Activated CD4-positive, alpha-beta memory T cell treated with anti-CD3 and anti-CD28 coated beads, Interleukin-2, amount 10 ng/mL, durations not matched to agents 7 days and 5 days (primary cell): ENCODE measurements at regions of chr2 and their contacts with region 1.

Region 1: DNA sequence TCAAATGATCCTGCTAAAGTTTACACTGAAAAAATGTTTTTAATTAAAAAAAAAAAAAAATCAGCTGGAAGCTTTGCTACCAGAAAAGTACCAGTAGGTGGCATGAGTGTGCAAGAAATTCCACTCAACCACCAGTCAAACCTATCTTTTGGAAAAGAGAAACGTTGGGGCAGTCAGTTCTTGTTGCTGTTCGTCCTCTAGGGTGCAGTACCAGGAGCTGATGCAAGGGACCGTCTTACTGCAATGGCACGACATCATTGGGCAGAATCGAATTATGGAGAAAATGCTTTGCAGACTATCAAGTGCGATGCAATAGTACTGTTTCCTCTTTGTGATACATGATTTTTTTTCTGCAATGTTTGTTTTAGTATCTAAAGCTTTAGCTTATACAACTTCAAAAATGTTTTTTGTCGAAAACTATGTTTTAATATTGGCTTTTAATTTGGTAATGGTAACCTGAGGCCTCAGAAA is 18.3 kb downstream of the YPEL5 start:
- DNase-seq: peak; percentile 69
- H3K4me3 Mint-ChIP-seq: no peak overlapping the region
- H3K27ac Mint-ChIP-seq: no peak overlapping the region
- H3K4me1 Mint-ChIP-seq: peaks cover 3% of the 10 kb centered on the region
- H3K27me3 Mint-ChIP-seq: no peaks in the 10 kb centered on the region

Region 2: DNA sequence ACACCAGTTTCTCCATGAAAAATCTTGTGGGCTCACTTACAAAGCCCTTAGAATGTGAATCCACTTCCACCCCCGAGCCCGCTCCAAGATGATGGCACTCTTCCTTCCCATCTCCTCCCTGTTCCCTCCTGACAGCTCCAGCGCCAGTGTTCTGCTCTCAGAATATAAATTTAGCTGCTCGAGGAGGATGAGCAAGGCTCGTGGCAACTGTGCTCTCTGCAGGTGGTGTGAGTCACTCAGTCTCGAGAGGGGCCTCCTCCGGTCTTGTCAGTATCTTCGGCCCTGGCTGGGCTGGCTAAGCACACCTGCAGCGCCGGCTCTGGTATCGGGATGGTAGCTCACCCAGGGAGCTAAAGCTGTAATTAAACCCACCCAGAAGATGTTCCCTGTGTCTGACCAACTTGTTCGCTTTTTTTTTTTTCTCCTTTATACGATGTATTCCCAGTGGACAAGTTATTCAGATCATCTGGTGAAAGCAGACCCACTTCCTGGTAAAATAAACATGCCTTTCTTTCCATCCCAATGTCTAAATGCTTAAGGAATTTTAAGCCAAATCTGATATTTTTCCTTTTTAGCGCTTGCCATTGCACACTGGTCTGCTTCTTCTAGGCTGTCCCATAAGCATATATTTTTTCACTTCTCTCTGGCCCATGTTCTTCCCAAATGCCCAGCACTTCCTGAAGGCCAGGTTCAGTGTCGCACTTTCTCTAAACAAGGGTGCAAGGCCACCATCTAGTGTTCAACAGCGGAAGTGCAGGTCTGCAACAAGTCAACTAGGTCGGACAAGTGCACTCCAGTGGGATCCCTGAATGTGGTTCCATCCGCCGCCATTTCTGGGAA is 49.7 kb before region 1 on chr2:
- CTCF ChIA-PET with region 1: interaction called, 14 read pairs
- POLR2A ChIA-PET with region 1: no interaction called
- DNase-seq: peak; percentile 70
- H3K4me3 Mint-ChIP-seq: no peak overlapping the region
- H3K27ac Mint-ChIP-seq: no peak overlapping the region
- H3K4me1 Mint-ChIP-seq: peaks cover 3% of the 10 kb centered on the region
- H3K27me3 Mint-ChIP-seq: peaks cover 2% of the 10 kb centered on the region

Region 3: DNA sequence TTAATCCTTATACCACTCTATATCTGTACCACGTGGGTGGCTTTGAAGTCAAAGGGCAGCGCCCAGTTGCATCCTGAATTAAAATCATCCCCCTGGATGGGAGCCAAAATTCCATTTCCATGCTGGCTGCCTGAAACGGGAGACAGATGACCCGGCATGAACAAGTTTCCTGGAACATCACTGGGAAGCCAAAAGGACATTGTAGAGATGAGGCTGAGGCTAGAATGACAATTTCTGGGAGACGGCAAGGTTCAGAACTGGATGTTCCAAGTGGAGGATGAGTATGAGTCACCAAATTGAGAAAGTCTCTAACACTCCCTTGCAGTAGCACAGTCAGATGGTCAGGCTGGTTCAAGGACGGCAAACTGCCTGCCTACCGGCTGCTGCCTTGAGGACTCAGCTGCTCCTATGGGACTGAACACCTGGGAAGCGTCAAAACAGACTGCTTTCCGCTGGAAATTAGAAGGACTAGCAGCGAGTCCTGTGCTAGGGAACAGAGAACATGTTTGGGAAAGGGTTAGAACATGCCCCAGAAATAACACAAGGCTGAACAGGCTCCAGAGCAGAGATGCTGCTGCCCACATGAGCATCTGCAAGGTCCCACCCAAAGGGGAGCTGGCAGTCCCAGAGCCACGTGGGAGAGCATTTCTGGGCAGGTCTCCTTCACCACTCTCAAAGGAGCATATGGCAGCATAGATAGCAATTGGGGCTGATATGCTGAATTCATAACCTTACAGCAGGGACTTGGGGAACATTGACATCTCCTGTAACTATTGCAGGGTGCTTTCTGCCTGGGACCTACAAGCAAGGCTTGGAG is 13.7 kb after region 1 on chr2:
- CTCF ChIA-PET with region 1: interaction called, 12 read pairs
- POLR2A ChIA-PET with region 1: interaction called, 3 read pairs
- DNase-seq: no peak
- H3K4me3 Mint-ChIP-seq: no peak overlapping the region
- H3K27ac Mint-ChIP-seq: no peak overlapping the region
- H3K4me1 Mint-ChIP-seq: no peaks in the 10 kb centered on the region
- H3K27me3 Mint-ChIP-seq: no peaks in the 10 kb centered on the region

Region 4: GRCh38 chr2:30208452-30208851 is 43.4 kb after region 1 on chr2:
- CTCF ChIA-PET with region 1: interaction called, 41 read pairs
- POLR2A ChIA-PET with region 1: no interaction called
- DNase-seq: peak; percentile 41
- H3K4me3 Mint-ChIP-seq: no peak overlapping the region
- H3K27ac Mint-ChIP-seq: no peak overlapping the region
- H3K4me1 Mint-ChIP-seq: peaks cover 16% of the 10 kb centered on the region
- H3K27me3 Mint-ChIP-seq: no peaks in the 10 kb centered on the region

Region 5: GRCh38 chr2:30280611-30281434 is 115.7 kb after region 1 on chr2:
- CTCF ChIA-PET with region 1: no interaction called
- POLR2A ChIA-PET with region 1: no interaction called
- DNase-seq: no peak
- H3K4me3 Mint-ChIP-seq: no peak overlapping the region
- H3K27ac Mint-ChIP-seq: no peak overlapping the region
- H3K4me1 Mint-ChIP-seq: peaks cover 8% of the 10 kb centered on the region
- H3K27me3 Mint-ChIP-seq: no peaks in the 10 kb centered on the region

Region 6: GRCh38 chr2:30336978-30337841 is 172.1 kb after region 1 on chr2:
- CTCF ChIA-PET with region 1: interaction called, 11 read pairs
- POLR2A ChIA-PET with region 1: interaction called, 3 read pairs
- DNase-seq: peak; percentile 75
- H3K4me3 Mint-ChIP-seq: peak overlapping the region; percentile 72
- H3K27ac Mint-ChIP-seq: peak overlapping the region; percentile 98
- H3K4me1 Mint-ChIP-seq: peaks cover 65% of the 10 kb centered on the region
- H3K27me3 Mint-ChIP-seq: no peaks in the 10 kb centered on the region